Transverse colon (tissue), 4 donors: ENCODE measurements at regions of chr7 and their contacts with region 1.

Region 1: GRCh38 chr7:56578617-56579016 is 462.4 kb upstream of the NUPR2 start:
- DNase-seq: no peak
- H3K4me3 ChIP-seq: no peak overlapping the region
- H3K27ac ChIP-seq: no peak overlapping the region
- H3K4me1 ChIP-seq: no peaks in the 10 kb centered on the region
- H3K27me3 ChIP-seq: no peaks in the 10 kb centered on the region
- CTCF ChIP-seq: no peak
- EP300 ChIP-seq: no peak
- POLR2A ChIP-seq: no peak

Region 2: DNA sequence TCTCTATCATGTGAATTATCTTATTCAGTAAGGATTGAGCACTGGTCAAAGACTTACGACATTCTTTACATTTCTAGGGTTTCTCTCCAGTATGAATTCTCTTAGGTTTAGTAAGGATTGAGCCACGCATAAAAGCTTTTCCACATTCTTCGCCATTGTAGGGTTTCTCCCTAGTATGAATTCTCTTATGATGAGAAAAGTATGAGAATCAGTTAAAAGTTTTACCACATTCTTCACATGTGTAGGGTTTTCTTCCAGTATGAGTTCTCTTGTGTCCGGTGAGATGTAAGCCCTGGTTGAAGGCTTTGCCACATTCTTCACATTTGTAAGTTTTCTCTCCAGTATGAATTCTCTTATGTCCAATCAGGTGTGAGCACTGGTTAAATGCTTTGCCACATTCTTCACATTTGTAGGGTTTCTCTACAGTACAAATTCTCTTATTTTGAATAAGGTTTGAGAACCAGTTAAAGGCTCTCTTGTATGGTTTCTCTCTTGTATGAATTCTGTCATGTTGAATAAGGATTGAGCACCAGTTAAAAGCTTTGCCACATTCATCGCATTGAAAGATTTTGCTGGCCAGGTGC is 107.8 kb after region 1 on chr7:
- in situ Hi-C with region 1: loop called in 1 of 4 experiments (anchors 25 kb)
- intact Hi-C with region 1: no loop called
- DNase-seq: no peak
- H3K4me3 ChIP-seq: no peak overlapping the region
- H3K27ac ChIP-seq: no peak overlapping the region
- H3K4me1 ChIP-seq: no peaks in the 10 kb centered on the region
- H3K27me3 ChIP-seq: no peaks in the 10 kb centered on the region
- CTCF ChIP-seq: no peak
- EP300 ChIP-seq: no peak
- POLR2A ChIP-seq: no peak